A549 (cell line): ENCODE measurements at regions of chr5 and their contacts with region 1.

Region 1: GRCh38 chr5:1380011-1380817 is 35.3 kb upstream of the CLPTM1L start:
- DNase-seq: peak in 1 of 2 experiments; percentile 78
- ATAC-seq: peak; percentile 85 to 98
- H3K4me3 ChIP-seq: peak overlapping the region; percentile 21; the same call in 2 of the 3 replicates
- H3K27ac ChIP-seq: peak overlapping the region in 1 of 2 experiments; percentile 38; a peak in 1 of 6 replicates
- H3K4me1 ChIP-seq: 0 out of 3 replicates have a peak, but pooled peaks cover 8% of the 10 kb centered on the region
- CTCF ChIP-seq: peak; percentile 79
- EP300 ChIP-seq: no peak
- POLR2A ChIP-seq: no peak
- RAD21 ChIP-seq: peak; percentile 49 to 72

Region 2: DNA sequence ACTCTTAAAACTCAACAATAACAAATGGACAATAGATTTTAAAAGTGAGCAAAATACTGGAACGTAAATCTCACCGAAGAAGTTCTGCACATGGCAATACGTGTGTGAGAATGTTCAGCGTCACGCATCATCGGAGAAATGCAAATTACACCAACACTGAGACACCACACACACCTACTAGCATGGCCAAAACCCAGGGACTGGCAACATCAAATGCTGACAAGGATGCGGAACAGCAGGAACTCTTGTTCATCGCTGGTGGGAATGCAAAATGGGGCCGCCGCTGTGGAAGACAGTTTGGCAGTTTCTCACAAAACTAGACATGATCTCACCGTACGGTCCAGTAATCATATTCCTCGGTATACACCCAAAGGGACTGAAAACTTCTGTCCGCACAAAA is 13.7 kb before region 1 on chr5:
- CTCF ChIA-PET with region 1: interaction called, 22 read pairs
- POLR2A ChIA-PET with region 1: no interaction called
- DNase-seq: no peak
- ATAC-seq: no peak
- H3K4me3 ChIP-seq: no peak overlapping the region
- H3K27ac ChIP-seq: no peak overlapping the region
- H3K4me1 ChIP-seq: no peaks in the 10 kb centered on the region
- CTCF ChIP-seq: no peak
- EP300 ChIP-seq: no peak
- POLR2A ChIP-seq: no peak
- RAD21 ChIP-seq: no peak

Region 3: GRCh38 chr5:1390861-1391600 is 10.8 kb after region 1 on chr5:
- CTCF ChIA-PET with region 1: interaction called, 17 read pairs
- POLR2A ChIA-PET with region 1: no interaction called
- DNase-seq: no peak
- ATAC-seq: no peak
- H3K4me3 ChIP-seq: no peak overlapping the region
- H3K27ac ChIP-seq: no peak overlapping the region
- H3K4me1 ChIP-seq: 0 out of 3 replicates have a peak, but pooled peaks cover 3% of the 10 kb centered on the region
- CTCF ChIP-seq: no peak
- EP300 ChIP-seq: no peak
- POLR2A ChIP-seq: no peak
- RAD21 ChIP-seq: no peak

Region 4: DNA sequence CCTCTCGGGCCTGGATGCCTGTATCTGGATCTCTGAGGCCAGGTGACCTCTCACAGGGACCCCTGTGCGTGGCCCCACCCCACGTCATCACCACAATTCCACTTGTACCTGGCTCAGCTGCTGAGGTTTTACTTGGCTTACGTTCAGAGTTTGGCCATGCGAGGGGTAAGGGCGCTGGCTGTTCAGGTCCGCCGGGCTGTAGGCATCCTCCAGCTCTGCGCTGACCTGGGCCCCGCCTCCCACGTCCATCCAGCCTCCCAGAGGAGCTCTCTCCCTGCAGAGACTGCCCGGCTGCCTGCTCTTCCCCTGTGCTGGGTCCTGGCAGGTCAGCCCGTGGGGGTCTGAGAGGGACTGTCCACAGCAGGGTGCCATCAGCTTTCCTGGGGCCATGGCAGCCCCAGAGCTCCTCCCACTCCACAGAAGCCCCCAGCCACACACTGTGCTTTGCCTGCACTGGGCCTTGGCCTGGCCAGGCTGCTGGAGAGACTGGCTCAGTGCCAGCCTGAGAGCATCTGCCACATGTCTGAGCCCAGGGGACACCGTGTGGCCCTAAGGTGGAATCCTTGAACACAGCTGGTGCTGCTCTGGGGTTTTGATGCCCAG is 21.4 kb after region 1 on chr5:
- CTCF ChIA-PET with region 1: interaction called, 17 read pairs
- POLR2A ChIA-PET with region 1: no interaction called
- DNase-seq: no peak
- ATAC-seq: peak in 1 of 2 experiments; percentile 20; a peak in 2 of 6 replicates
- H3K4me3 ChIP-seq: no peak overlapping the region
- H3K27ac ChIP-seq: no peak overlapping the region
- H3K4me1 ChIP-seq: no peaks in the 10 kb centered on the region
- CTCF ChIP-seq: no peak
- EP300 ChIP-seq: no peak
- POLR2A ChIP-seq: no peak
- RAD21 ChIP-seq: no peak

Region 5: DNA sequence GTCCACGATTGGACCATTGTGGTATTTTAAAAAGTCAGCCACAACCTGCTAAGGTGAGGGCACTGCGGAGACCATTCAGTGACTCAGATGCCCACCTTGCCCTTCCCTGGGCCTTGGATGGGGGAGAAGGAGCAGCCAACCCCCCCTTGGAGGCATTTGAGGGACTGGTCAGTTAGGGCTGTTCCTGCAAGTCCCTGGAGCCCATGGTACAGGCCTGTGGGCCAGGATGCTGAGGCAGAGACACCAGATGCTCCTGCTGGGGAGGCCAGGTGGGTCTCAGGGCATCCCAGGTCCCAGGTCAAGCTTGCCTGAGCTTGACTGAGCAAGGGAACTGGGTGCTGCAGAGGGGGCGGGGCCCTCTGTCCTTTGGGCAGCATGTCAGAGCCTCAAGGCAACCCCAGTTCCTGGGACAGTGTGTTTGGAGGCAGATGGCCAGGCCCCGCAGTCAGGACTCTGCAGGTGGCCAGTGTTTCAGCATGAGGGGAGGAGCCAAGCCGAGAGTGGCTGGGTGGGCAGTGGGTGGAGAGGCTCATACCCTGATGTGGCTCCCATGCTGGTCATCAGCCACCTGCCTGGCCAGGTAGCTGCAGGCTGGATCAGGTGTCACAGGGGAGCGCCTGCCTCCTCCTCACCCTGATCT is 37.5 kb after region 1 on chr5:
- CTCF ChIA-PET with region 1: interaction called, 10 read pairs
- POLR2A ChIA-PET with region 1: no interaction called
- DNase-seq: no peak
- ATAC-seq: no peak
- H3K4me3 ChIP-seq: no peak overlapping the region
- H3K27ac ChIP-seq: no peak overlapping the region; a peak in 1 of 6 replicates
- H3K4me1 ChIP-seq: no peaks in the 10 kb centered on the region
- CTCF ChIP-seq: no peak
- EP300 ChIP-seq: no peak
- POLR2A ChIP-seq: no peak
- RAD21 ChIP-seq: no peak

Region 6: GRCh38 chr5:1652596-1653345 is 272.6 kb after region 1 on chr5:
- CTCF ChIA-PET with region 1: interaction called, 10 read pairs
- POLR2A ChIA-PET with region 1: no interaction called
- DNase-seq: no peak
- ATAC-seq: peak in 1 of 2 experiments; percentile 3; a peak in 2 of 6 replicates
- H3K4me3 ChIP-seq: peak overlapping the region; percentile 37; the same call in 1 of the 3 replicates
- H3K27ac ChIP-seq: no peak overlapping the region
- H3K4me1 ChIP-seq: peaks cover 10% of the 10 kb centered on the region; the same call in 2 of the 3 replicates
- CTCF ChIP-seq: no peak
- EP300 ChIP-seq: no peak
- POLR2A ChIP-seq: no peak
- RAD21 ChIP-seq: no peak

Region 7: DNA sequence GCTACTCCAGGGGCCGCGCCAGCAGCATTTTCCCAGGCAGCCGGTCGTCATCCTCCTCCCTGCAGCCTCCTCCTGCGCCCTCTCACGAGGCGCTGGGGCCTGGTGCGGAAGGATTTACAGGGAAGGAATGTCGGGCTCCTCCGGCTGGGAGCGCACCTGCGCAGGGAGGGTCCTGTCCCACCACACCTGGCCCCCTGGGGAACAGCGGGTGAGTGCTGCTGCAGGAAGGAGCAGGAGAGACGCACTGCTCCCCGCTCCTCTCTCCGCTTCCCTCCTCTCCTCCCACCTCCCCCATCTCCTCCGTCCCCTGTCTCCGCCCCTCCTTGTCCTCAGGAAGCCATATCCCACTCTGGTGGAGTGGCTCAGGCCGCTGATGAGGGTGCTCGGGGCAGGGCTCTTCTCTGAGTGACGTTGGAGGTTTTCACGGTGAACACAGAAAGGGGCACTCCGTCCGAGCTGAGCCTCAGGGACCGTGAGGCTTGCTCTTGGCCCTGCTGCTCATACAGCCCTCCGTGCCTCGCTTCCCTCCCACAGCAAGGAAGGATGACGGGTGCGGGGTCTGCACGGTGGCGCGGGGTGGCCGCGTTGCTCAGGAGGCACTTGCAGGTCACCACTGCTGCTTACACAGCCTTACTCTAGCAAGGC is 471.2 kb after region 1 on chr5:
- CTCF ChIA-PET with region 1: no interaction called
- POLR2A ChIA-PET with region 1: no interaction called
- DNase-seq: no peak
- ATAC-seq: no peak
- H3K4me3 ChIP-seq: no peak overlapping the region
- H3K27ac ChIP-seq: no peak overlapping the region
- H3K4me1 ChIP-seq: no peaks in the 10 kb centered on the region
- CTCF ChIP-seq: no peak
- EP300 ChIP-seq: no peak
- POLR2A ChIP-seq: no peak
- RAD21 ChIP-seq: no peak